Activated CD4-positive, alpha-beta T cell treated with anti-CD3 and anti-CD28 coated beads, Interleukin-2, amount 10 ng/mL, durations not matched to agents 7 days and 5 days (primary cell): ENCODE measurements at regions of chr2 and their contacts with region 1.

Region 1: GRCh38 chr2:174682007-174682577 is 82.2 kb downstream of the CHRNA1 start:
- DNase-seq: peak; percentile 35
- H3K4me3 Mint-ChIP-seq: peak overlapping the region; percentile 84
- H3K27ac Mint-ChIP-seq: peak overlapping the region; percentile 90
- H3K4me1 Mint-ChIP-seq: peaks cover 55% of the 10 kb centered on the region
- H3K27me3 Mint-ChIP-seq: no peaks in the 10 kb centered on the region

Region 2: GRCh38 chr2:174667379-174667781 is 14.7 kb before region 1 on chr2:
- CTCF ChIA-PET with region 1: interaction called, 16 read pairs
- POLR2A ChIA-PET with region 1: no interaction called
- DNase-seq: no peak
- H3K4me3 Mint-ChIP-seq: no peak overlapping the region
- H3K27ac Mint-ChIP-seq: peak overlapping the region; percentile 42
- H3K4me1 Mint-ChIP-seq: peaks cover 22% of the 10 kb centered on the region
- H3K27me3 Mint-ChIP-seq: no peaks in the 10 kb centered on the region

Region 3: GRCh38 chr2:175147186-175147585 is 465.1 kb after region 1 on chr2:
- CTCF ChIA-PET with region 1: no interaction called
- POLR2A ChIA-PET with region 1: no interaction called
- DNase-seq: no peak
- H3K4me3 Mint-ChIP-seq: no peak overlapping the region
- H3K27ac Mint-ChIP-seq: no peak overlapping the region
- H3K4me1 Mint-ChIP-seq: peaks cover 19% of the 10 kb centered on the region
- H3K27me3 Mint-ChIP-seq: no peaks in the 10 kb centered on the region